ENCODE measurements at regions of chr14 and their contacts with region 1.

Region 1: DNA sequence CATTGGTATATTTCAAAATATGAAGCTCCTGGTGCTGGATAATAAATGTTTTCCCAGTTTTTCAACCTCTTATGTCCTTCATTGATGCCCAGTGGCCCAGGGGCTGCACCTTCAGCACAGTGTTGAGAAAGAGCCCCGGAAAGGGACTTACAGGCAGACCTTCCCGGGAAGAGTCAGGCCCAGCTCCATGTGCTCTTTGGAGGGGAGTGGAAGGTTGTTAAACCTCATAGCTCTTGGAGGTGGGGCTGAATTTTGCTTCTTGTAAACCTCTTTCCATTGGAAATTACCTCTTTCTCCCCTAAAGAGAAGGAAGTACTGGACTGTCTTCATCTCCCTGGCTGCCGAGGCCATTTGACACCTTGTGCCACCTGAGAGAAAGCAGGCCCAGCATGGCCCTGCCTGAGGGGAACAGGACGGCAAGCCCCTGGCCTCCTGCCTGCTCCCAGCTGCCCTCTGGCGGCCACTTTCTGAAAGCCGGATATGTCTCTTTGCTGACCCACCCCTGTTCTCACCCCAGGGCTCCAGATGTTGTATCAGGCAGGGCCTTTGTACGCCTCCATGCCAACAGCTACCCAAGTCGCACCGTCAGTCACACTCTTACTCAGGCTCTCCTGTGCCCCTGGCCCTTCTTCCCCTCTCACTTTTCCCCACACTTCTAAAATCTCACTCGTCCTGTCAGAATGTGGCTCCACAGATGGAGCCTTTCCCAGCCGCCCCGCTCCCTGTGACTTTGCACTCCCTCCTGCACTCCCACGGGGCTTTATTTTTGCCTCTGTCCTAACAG is 43.0 kb downstream of the EVL start:
- DNase-seq: peak; percentile 80 to 93 (median 88)
- ATAC-seq: peak; percentile 50
- H3K4me3 ChIP-seq: no peak overlapping the region
- H3K4me3 Mint-ChIP-seq: peak overlapping the region; percentile 49
- H3K27ac ChIP-seq: peak overlapping the region; percentile 21 to 59
- H3K27ac Mint-ChIP-seq: peak overlapping the region; percentile 99
- H3K4me1 ChIP-seq: peaks cover 83% of the 10 kb centered on the region
- H3K4me1 Mint-ChIP-seq: peaks cover 88% of the 10 kb centered on the region
- H3K27me3 ChIP-seq: no peaks in the 10 kb centered on the region
- H3K27me3 Mint-ChIP-seq: no peaks in the 10 kb centered on the region
- CTCF ChIP-seq: peak; percentile 83

Region 2: DNA sequence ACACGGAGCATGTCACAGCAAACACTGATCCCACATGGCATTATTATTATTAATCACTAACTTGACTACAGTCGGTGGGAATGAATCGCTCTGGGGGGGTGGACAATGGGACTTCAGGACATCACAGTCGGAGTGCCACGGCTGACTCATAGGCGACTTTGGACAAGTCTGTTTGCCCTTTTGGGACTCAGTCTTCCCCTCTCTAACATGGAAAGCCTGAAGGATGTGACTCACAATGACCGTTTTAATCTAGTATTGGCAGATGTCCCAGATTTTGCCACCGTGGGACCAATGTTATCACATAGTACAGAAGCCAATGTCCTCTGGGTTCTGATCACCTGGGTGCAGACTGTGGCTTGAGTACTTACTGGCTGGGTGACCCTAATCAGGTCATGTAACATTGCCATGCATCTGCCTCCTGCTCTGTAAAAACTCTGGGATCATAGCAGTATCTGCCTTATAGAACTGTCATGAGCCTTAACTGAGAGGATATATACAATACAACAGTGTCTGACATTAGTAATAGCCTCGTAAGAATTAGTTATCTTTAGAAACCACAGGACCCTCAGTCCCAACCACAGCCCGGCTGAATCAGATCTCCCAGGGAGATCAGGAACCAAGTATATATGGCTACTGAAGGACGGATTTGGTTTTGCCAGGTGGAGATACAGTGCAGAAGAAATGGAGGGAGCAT is 1198.8 kb before region 1 on chr14:
- CTCF ChIA-PET with region 1: no interaction called
- POLR2A ChIA-PET with region 1: no interaction called
- intact Hi-C with region 1: no loop called
- DNase-seq: no peak
- ATAC-seq: no peak
- H3K4me3 ChIP-seq: no peak overlapping the region
- H3K4me3 Mint-ChIP-seq: no peak overlapping the region
- H3K27ac ChIP-seq: no peak overlapping the region
- H3K27ac Mint-ChIP-seq: no peak overlapping the region
- H3K4me1 ChIP-seq: peaks cover 14% of the 10 kb centered on the region
- H3K4me1 Mint-ChIP-seq: peaks cover 22% of the 10 kb centered on the region
- H3K27me3 ChIP-seq: no peaks in the 10 kb centered on the region
- H3K27me3 Mint-ChIP-seq: no peaks in the 10 kb centered on the region
- CTCF ChIP-seq: no peak

Region 3: DNA sequence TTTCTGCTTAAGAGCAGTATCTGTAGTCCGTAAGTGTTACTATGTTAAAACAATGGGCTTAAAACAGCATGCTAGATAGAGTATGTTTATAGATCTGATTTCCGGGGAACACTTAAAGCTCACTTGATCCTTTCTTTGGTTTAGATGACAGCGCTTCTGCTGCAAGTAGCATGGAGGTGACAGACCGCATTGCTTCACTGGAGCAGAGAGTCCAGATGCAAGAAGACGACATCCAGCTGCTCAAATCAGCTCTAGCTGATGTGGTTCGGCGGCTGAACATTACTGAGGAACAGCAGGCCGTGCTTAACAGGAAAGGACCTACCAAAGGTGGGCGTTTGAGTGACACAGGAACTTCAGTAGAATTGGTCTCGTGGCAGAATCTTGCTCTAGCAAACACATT is 257.5 kb before region 1 on chr14:
- CTCF ChIA-PET with region 1: no interaction called
- POLR2A ChIA-PET with region 1: no interaction called
- intact Hi-C with region 1: no loop called
- DNase-seq: no peak
- ATAC-seq: no peak
- H3K4me3 ChIP-seq: no peak overlapping the region
- H3K4me3 Mint-ChIP-seq: no peak overlapping the region
- H3K27ac ChIP-seq: no peak overlapping the region
- H3K27ac Mint-ChIP-seq: no peak overlapping the region
- H3K4me1 ChIP-seq: no peaks in the 10 kb centered on the region
- H3K4me1 Mint-ChIP-seq: no peaks in the 10 kb centered on the region
- H3K27me3 ChIP-seq: peaks cover 0 to 6% of the 10 kb centered on the region in 2 experiments
- H3K27me3 Mint-ChIP-seq: peaks cover 29% of the 10 kb centered on the region
- CTCF ChIP-seq: no peak

Region 4: GRCh38 chr14:99925471-99925870 is 182.8 kb before region 1 on chr14:
- CTCF ChIA-PET with region 1: no interaction called
- POLR2A ChIA-PET with region 1: no interaction called
- intact Hi-C with region 1: no loop called
- DNase-seq: no peak
- ATAC-seq: no peak
- H3K4me3 ChIP-seq: no peak overlapping the region
- H3K4me3 Mint-ChIP-seq: no peak overlapping the region
- H3K27ac ChIP-seq: no peak overlapping the region
- H3K27ac Mint-ChIP-seq: no peak overlapping the region
- H3K4me1 ChIP-seq: no peaks in the 10 kb centered on the region
- H3K4me1 Mint-ChIP-seq: no peaks in the 10 kb centered on the region
- H3K27me3 ChIP-seq: peaks cover 0 to 3% of the 10 kb centered on the region in 2 experiments
- H3K27me3 Mint-ChIP-seq: peaks cover 18% of the 10 kb centered on the region
- CTCF ChIP-seq: no peak

Region 5: DNA sequence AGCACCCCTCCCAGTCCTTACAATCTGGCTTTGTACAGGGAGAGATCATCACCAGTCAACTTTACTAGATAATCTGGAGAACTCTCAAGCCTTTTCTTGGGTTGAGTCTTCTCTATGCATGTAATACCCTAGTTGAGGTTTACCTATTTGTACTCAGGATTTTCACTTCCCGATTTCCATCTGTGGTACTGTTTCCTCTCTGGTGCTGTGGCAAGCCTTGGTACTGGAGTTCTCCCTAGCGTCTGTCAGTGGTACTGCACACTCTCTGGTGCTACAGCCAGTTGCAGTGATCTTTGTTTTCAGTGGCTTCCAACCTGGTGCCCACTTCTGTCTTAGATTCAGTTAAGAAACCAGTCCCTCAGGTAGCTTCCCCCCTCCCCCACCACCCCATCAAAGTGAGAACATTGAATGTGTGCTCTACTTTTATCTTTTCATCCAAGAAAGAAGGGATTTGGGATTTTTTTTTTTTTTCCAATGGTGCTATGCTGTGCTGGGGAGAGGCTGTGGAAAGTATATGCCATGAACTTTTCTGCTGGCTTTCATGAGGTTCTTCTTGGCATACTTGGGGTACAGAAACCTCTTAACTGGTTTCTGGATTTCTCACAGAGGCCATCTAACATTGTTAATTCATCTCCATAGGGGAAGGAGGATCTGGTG is 112.4 kb before region 1 on chr14:
- CTCF ChIA-PET with region 1: no interaction called
- POLR2A ChIA-PET with region 1: no interaction called
- intact Hi-C with region 1: loop called in 1 of 2 experiments (anchors 5 kb)
- DNase-seq: peak; percentile 33 to 80 (median 71)
- ATAC-seq: peak; percentile 98
- H3K4me3 ChIP-seq: no peak overlapping the region
- H3K4me3 Mint-ChIP-seq: no peak overlapping the region
- H3K27ac ChIP-seq: no peak overlapping the region
- H3K27ac Mint-ChIP-seq: no peak overlapping the region
- H3K4me1 ChIP-seq: no peaks in the 10 kb centered on the region
- H3K4me1 Mint-ChIP-seq: peaks cover 3% of the 10 kb centered on the region
- H3K27me3 ChIP-seq: no peaks in the 10 kb centered on the region
- H3K27me3 Mint-ChIP-seq: peaks cover 2% of the 10 kb centered on the region
- CTCF ChIP-seq: peak; percentile 86

Region 6: GRCh38 chr14:100067971-100068959 is 40.0 kb before region 1 on chr14:
- CTCF ChIA-PET with region 1: interaction called, 1,143 read pairs
- POLR2A ChIA-PET with region 1: interaction called, 700 read pairs
- intact Hi-C with region 1: loop called (anchors 1 kb)
- DNase-seq: peak; percentile 70 to 98 (median 88)
- ATAC-seq: peak; percentile 50
- H3K4me3 ChIP-seq: peak overlapping the region; percentile 73 to 85
- H3K4me3 Mint-ChIP-seq: peak overlapping the region; percentile 100
- H3K27ac ChIP-seq: peak overlapping the region; percentile 83 to 87
- H3K27ac Mint-ChIP-seq: peak overlapping the region; percentile 99
- H3K4me1 ChIP-seq: peaks cover 59% of the 10 kb centered on the region
- H3K4me1 Mint-ChIP-seq: peaks cover 82% of the 10 kb centered on the region
- H3K27me3 ChIP-seq: no peaks in the 10 kb centered on the region
- H3K27me3 Mint-ChIP-seq: no peaks in the 10 kb centered on the region
- CTCF ChIP-seq: no peak

Region 7: DNA sequence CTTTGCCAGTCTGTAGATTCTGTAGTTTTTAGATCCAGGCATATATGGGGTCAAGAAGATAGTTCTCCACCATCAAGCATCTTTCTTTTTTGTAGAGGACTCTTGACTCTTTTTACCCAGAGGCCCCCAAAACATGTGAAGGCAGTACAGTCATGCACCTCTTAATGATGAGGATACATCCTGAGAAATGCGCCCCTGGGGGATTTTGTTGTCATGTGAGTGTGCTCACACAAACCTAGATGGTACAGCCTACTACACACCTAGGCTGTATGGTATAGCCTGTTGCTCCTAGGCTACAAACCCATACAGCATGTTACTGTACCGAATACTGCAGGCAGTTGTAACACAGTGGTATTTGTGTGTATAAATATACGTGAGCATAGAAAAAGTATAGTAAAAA is 20.0 kb before region 1 on chr14:
- CTCF ChIA-PET with region 1: interaction called, 1,143 read pairs
- POLR2A ChIA-PET with region 1: interaction called, 700 read pairs
- intact Hi-C with region 1: loop called in 1 of 2 experiments (anchors 2 kb)
- DNase-seq: peak in 2 of 9 experiments; percentile 4 to 12
- ATAC-seq: no peak
- H3K4me3 ChIP-seq: no peak overlapping the region
- H3K4me3 Mint-ChIP-seq: peak overlapping the region; percentile 46
- H3K27ac ChIP-seq: no peak overlapping the region
- H3K27ac Mint-ChIP-seq: peak overlapping the region; percentile 99
- H3K4me1 ChIP-seq: peaks cover 98% of the 10 kb centered on the region
- H3K4me1 Mint-ChIP-seq: peaks cover 94% of the 10 kb centered on the region
- H3K27me3 ChIP-seq: no peaks in the 10 kb centered on the region
- H3K27me3 Mint-ChIP-seq: no peaks in the 10 kb centered on the region
- CTCF ChIP-seq: no peak

Region 8: GRCh38 chr14:100122481-100123222 is 14.4 kb after region 1 on chr14:
- CTCF ChIA-PET with region 1: interaction called, 36 read pairs
- POLR2A ChIA-PET with region 1: interaction called, 3 read pairs
- intact Hi-C with region 1: no loop called
- DNase-seq: no peak
- ATAC-seq: no peak
- H3K4me3 ChIP-seq: no peak overlapping the region
- H3K4me3 Mint-ChIP-seq: no peak overlapping the region
- H3K27ac ChIP-seq: no peak overlapping the region
- H3K27ac Mint-ChIP-seq: peak overlapping the region; percentile 64
- H3K4me1 ChIP-seq: peaks cover 7% of the 10 kb centered on the region
- H3K4me1 Mint-ChIP-seq: peaks cover 23% of the 10 kb centered on the region
- H3K27me3 ChIP-seq: no peaks in the 10 kb centered on the region
- H3K27me3 Mint-ChIP-seq: no peaks in the 10 kb centered on the region
- CTCF ChIP-seq: no peak

Measured in CD8-positive, alpha-beta T cell (primary cell).